ENCODE measurements at regions of chr1 and their contacts with region 1.

Region 1: DNA sequence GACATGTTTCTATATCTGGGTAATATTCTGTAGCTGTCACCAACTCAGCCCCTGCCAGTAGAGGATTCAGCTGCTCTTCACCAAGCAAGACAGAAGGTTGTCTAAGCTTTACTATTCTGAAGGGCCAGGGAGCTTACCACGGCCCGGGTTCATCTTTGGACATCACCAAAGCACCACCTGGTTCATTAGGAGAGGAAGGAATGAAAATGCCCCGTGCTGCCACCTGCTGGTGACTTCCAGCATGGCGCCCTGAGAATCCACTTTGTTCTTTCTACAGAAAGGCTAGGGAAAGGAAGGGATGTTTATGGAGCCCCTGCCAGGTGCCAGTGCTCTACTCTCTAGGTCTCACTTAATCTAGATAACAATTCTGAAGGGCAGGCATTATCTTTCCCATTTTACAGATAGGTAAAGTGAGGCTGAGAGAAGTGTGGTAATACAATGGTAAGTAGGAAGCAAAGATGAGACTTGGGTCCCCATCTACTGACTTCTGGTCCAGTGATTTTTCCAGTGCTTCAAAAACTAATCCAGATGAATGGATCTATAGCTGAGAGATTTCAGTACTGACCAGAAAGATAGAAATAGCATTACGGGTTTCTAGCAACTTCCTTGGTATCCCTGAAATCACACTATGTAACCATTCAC is 79.5 kb downstream of the BEND5 start:
- DNase-seq: peak; percentile 44
- ATAC-seq: no peak

Region 2: DNA sequence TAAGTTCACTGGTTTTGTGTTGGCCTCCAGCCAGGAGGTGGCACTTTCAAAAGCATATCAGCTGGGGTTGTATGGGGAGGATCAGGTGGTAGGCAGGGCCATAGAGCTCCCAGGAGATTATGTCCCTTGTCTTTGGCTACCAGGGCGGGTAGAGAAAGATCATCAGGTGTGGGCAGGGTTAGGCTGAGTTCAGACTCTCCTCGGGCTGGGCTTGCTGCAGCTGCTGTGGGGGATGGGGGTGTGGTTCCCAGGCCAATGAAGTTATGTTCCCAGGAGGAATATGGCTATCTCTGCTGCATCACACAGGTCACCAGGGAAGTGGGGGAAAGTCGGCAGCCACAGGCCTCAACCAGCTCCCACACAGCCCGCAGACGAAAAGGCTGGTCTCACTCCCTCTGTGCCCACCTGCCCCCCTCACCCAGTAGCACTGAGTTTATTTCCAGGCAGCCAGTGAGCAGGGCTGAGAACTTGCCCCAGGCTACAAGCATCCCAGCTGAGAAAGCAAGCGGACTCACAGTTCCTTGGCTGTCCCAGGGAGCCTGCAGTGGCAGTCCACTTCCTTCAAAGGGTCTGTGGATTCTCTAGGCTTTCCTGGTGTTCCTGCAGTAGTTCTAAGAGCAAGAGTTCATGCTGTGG is 405.9 kb before region 1 on chr1:
- intact Hi-C with region 1: no loop called
- DNase-seq: no peak
- ATAC-seq: no peak

Region 3: DNA sequence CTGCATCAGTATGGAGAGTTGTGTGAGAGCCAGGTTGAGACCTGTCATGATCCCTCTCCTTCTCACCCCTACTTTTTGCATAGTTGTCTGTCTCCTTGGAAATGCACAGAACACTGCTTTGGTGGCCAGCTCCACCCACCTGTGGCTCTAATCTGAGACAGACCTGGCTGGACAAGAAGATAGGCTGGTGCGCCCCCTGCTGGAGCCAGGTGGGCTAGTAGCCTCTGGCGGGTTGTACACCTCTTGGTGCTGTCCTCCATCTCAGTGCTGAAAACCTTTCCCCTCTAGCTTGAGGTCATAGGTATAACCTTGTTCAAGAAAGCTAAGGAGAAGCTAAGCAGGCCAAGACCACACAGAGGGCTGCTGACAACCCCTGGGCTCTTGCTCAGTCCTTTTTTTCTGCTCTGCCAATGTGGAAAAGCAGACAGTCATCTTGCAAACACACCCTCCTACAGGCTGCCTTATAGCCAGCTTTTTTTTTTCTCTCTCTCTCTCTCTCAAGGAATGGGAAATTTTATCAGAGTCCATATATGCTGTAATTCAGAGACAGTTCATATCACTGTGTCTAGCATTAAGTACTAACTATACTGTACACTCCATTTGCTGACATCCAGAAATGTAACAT is 166.3 kb before region 1 on chr1:
- intact Hi-C with region 1: no loop called
- DNase-seq: no peak
- ATAC-seq: peak in 1 of 2 donors; percentile 38

Region 4: GRCh38 chr1:48552420-48552819 is 144.8 kb before region 1 on chr1:
- intact Hi-C with region 1: loop called in 1 of 2 experiments (anchors 5 kb)
- DNase-seq: no peak
- ATAC-seq: peak; percentile 54 to 60

Region 5: GRCh38 chr1:48572646-48573261 is 124.4 kb before region 1 on chr1:
- intact Hi-C with region 1: loop called (anchors 5 to 10 kb)
- DNase-seq: peak; percentile 61
- ATAC-seq: peak; percentile 77

Region 6: GRCh38 chr1:48817505-48818114 is 120.4 kb after region 1 on chr1:
- intact Hi-C with region 1: loop called in 1 of 2 experiments (anchors 10 kb)
- DNase-seq: peak; percentile 64
- ATAC-seq: peak; percentile 76 to 84